Common myeloid progenitor, CD34-positive (primary cell): ENCODE measurements at regions of chr7 and their contacts with region 1.

Region 1: GRCh38 chr7:47653550-47654351 is 71.8 kb upstream of the TNS3 start:
- DNase-seq: peak in 1 of 3 donors; percentile 13
- H3K4me3 ChIP-seq: no peak overlapping the region
- H3K27ac ChIP-seq: no peak overlapping the region
- H3K4me1 ChIP-seq: peaks cover 4 to 47% (median 21%) of the 10 kb centered on the region in 4 experiments
- H3K27me3 ChIP-seq: no peaks in the 10 kb centered on the region

Region 2: DNA sequence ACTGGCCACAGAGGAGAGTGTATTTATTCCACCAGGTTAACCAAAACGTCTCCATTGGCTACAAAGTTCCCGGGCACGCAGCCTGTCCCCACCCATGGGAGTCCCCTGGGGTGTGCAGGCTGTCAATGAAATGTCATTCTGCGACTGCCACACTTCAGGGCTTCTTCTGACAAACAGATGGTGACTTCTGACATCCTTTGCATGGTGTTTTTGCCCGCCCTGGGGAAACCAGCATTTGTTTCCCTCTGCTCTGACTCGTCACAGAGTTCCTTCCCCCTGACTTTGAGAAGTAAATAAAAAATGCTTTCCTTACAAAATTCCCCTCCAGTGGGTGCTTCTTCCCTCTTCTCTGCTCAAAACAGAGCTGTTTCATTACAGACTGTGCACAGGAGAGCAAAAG is 110.0 kb before region 1 on chr7:
- CTCF ChIA-PET with region 1: no interaction called
- POLR2A ChIA-PET with region 1: no interaction called
- DNase-seq: peak in 1 of 3 donors; percentile 22
- H3K4me3 ChIP-seq: no peak overlapping the region
- H3K27ac ChIP-seq: no peak overlapping the region
- H3K4me1 ChIP-seq: peaks cover 0 to 21% (median 16%) of the 10 kb centered on the region in 4 experiments
- H3K27me3 ChIP-seq: no peaks in the 10 kb centered on the region

Region 3: GRCh38 chr7:47663851-47664603 is 10.3 kb after region 1 on chr7:
- CTCF ChIA-PET with region 1: interaction called, 11 read pairs
- POLR2A ChIA-PET with region 1: no interaction called
- DNase-seq: no peak
- H3K4me3 ChIP-seq: no peak overlapping the region
- H3K27ac ChIP-seq: no peak overlapping the region
- H3K4me1 ChIP-seq: peaks cover 0 to 2% (median under 1%) of the 10 kb centered on the region in 4 experiments
- H3K27me3 ChIP-seq: no peaks in the 10 kb centered on the region